ENCODE measurements at regions of chr11 and their contacts with region 1.

Region 1: GRCh38 chr11:16613512-16614381 is 124.7 kb upstream of the C11orf58 start:
- DNase-seq: peak; percentile 87
- ATAC-seq: peak; percentile 97
- H3K4me3 Mint-ChIP-seq: peak overlapping the region; percentile 62
- H3K27ac Mint-ChIP-seq: no peak overlapping the region
- H3K4me1 Mint-ChIP-seq: peaks cover 22% of the 10 kb centered on the region
- H3K27me3 Mint-ChIP-seq: peaks cover 48% of the 10 kb centered on the region

Region 2: DNA sequence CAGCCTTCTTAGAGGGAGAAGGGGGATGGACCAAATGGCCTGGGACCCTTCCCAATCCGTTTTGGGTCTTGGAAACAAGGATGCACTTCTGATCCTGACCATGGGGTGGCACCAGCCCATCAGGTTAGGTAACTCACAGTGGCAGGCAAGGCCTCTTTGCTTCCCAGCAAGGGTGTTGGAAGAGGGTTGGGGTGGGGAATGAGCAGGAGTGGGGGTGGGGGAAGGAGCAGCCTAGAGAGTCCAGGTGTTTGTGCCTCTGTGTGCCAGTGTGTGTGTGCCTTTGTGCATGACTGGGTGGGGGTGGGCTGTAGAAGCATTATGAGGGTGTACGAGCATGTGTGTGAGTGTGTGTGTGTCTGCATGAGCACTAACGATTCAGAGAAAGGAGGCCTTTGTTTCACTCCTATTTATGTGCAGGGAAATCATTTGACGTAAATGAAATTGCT is 1285.9 kb before region 1 on chr11:
- CTCF ChIA-PET with region 1: interaction called, 3 read pairs
- POLR2A ChIA-PET with region 1: no interaction called
- intact Hi-C with region 1: loop called in 1 of 2 experiments (anchors 1 kb)
- DNase-seq: peak; percentile 35
- ATAC-seq: no peak
- H3K4me3 Mint-ChIP-seq: no peak overlapping the region
- H3K27ac Mint-ChIP-seq: no peak overlapping the region
- H3K4me1 Mint-ChIP-seq: no peaks in the 10 kb centered on the region
- H3K27me3 Mint-ChIP-seq: peaks cover 3% of the 10 kb centered on the region

Region 3: GRCh38 chr11:15770798-15771414 is 842.8 kb before region 1 on chr11:
- CTCF ChIA-PET with region 1: interaction called, 4 read pairs
- POLR2A ChIA-PET with region 1: no interaction called
- intact Hi-C with region 1: loop called in 1 of 2 experiments (anchors 2 kb)
- DNase-seq: peak; percentile 59
- ATAC-seq: no peak
- H3K4me3 Mint-ChIP-seq: no peak overlapping the region
- H3K27ac Mint-ChIP-seq: no peak overlapping the region
- H3K4me1 Mint-ChIP-seq: no peaks in the 10 kb centered on the region
- H3K27me3 Mint-ChIP-seq: no peaks in the 10 kb centered on the region

Region 4: DNA sequence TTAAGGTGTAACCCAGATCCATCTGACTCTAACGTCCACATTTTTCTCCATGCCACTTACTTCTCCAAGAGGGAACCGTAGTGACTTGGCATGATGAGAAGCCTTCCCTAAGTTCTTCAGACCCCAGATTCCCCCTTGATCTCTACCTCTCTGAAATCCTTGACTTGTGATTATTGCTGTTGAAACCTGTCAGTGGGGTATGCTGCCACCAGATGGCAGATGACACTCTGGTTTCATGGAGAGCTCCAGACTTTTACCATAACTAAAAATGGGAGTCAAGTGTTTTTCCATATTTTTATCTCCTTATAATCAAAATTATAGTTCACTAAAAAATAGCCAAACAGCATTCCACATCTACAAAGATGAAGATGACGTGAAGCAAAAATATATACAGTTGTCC is 761.6 kb before region 1 on chr11:
- CTCF ChIA-PET with region 1: interaction called, 5 read pairs
- POLR2A ChIA-PET with region 1: no interaction called
- intact Hi-C with region 1: loop called in 1 of 2 experiments (anchors 2 kb)
- DNase-seq: no peak
- ATAC-seq: no peak
- H3K4me3 Mint-ChIP-seq: no peak overlapping the region
- H3K27ac Mint-ChIP-seq: no peak overlapping the region
- H3K4me1 Mint-ChIP-seq: no peaks in the 10 kb centered on the region
- H3K27me3 Mint-ChIP-seq: peaks cover 13% of the 10 kb centered on the region

Region 5: DNA sequence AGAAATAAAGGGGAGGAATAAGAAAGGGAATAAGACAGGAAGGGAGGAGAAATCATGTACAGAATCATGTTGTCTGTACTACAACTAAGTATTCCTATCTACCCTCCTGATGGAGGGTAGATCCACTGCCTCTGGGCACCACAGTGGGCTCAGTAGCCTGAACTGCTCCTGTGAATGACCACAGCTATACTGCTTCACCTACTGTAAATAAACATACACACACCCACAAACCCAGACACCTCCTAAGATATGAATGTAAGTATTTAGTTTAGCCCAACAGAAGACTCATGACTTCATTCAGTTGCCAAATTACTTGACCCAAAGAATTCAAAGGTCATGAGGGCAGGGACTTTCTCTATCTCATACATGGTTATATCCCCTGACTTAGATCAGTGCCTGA is 52.6 kb before region 1 on chr11:
- CTCF ChIA-PET with region 1: no interaction called
- POLR2A ChIA-PET with region 1: no interaction called
- intact Hi-C with region 1: no loop called
- DNase-seq: no peak
- ATAC-seq: no peak
- H3K4me3 Mint-ChIP-seq: no peak overlapping the region
- H3K27ac Mint-ChIP-seq: no peak overlapping the region
- H3K4me1 Mint-ChIP-seq: no peaks in the 10 kb centered on the region
- H3K27me3 Mint-ChIP-seq: no peaks in the 10 kb centered on the region

Region 6: GRCh38 chr11:16596231-16596630 is 17.5 kb before region 1 on chr11:
- CTCF ChIA-PET with region 1: interaction called, 11 read pairs
- POLR2A ChIA-PET with region 1: no interaction called
- intact Hi-C with region 1: no loop called
- DNase-seq: no peak
- ATAC-seq: no peak
- H3K4me3 Mint-ChIP-seq: no peak overlapping the region
- H3K27ac Mint-ChIP-seq: no peak overlapping the region
- H3K4me1 Mint-ChIP-seq: no peaks in the 10 kb centered on the region
- H3K27me3 Mint-ChIP-seq: peaks cover 20% of the 10 kb centered on the region

Measured in activated CD4-positive, alpha-beta T cell treated with anti-CD3 and anti-CD28 coated beads for 36 hours (primary cell).